Calu3 (cell line): ENCODE measurements at regions of chr7 and their contacts with region 1.

Region 1: GRCh38 chr7:7830122-7830878 is 111.9 kb upstream of the RPA3 start:
- DNase-seq: peak; percentile 42
- H3K4me3 Mint-ChIP-seq: no peak overlapping the region
- H3K27ac Mint-ChIP-seq: peak overlapping the region; percentile 23
- H3K4me1 Mint-ChIP-seq: peaks cover 14% of the 10 kb centered on the region
- H3K27me3 Mint-ChIP-seq: no peaks in the 10 kb centered on the region
- CTCF ChIP-seq: no peak

Region 2: GRCh38 chr7:7595451-7595850 is 234.8 kb before region 1 on chr7:
- CTCF ChIA-PET with region 1: no interaction called
- intact Hi-C with region 1: no loop called
- DNase-seq: no peak
- H3K4me3 Mint-ChIP-seq: no peak overlapping the region
- H3K27ac Mint-ChIP-seq: no peak overlapping the region
- H3K4me1 Mint-ChIP-seq: no peaks in the 10 kb centered on the region
- H3K27me3 Mint-ChIP-seq: no peaks in the 10 kb centered on the region
- CTCF ChIP-seq: peak; percentile 46

Region 3: GRCh38 chr7:7719236-7719635 is 111.1 kb before region 1 on chr7:
- CTCF ChIA-PET with region 1: no interaction called
- intact Hi-C with region 1: no loop called
- DNase-seq: peak; percentile 51
- H3K4me3 Mint-ChIP-seq: no peak overlapping the region
- H3K27ac Mint-ChIP-seq: peak overlapping the region; percentile 69
- H3K4me1 Mint-ChIP-seq: peaks cover 20% of the 10 kb centered on the region
- H3K27me3 Mint-ChIP-seq: no peaks in the 10 kb centered on the region
- CTCF ChIP-seq: no peak

Region 4: GRCh38 chr7:7848246-7848645 is 17.9 kb after region 1 on chr7:
- CTCF ChIA-PET with region 1: interaction called, 3 read pairs
- intact Hi-C with region 1: loop called (anchors 1 kb)
- DNase-seq: no peak
- H3K4me3 Mint-ChIP-seq: no peak overlapping the region
- H3K27ac Mint-ChIP-seq: no peak overlapping the region
- H3K4me1 Mint-ChIP-seq: peaks cover 35% of the 10 kb centered on the region
- H3K27me3 Mint-ChIP-seq: no peaks in the 10 kb centered on the region
- CTCF ChIP-seq: no peak